MCF 10A (cell line): ENCODE measurements at regions of chr3 and their contacts with region 1.

Region 1: GRCh38 chr3:112676659-112677234 is 35.8 kb upstream of the CCDC80 start:
- DNase-seq: peak; percentile 97
- H3K4me3 Mint-ChIP-seq: peak overlapping the region; percentile 45
- H3K27ac Mint-ChIP-seq: peak overlapping the region; percentile 87
- H3K4me1 Mint-ChIP-seq: peaks cover 36% of the 10 kb centered on the region
- H3K27me3 Mint-ChIP-seq: no peaks in the 10 kb centered on the region
- CTCF ChIP-seq: no peak

Region 2: DNA sequence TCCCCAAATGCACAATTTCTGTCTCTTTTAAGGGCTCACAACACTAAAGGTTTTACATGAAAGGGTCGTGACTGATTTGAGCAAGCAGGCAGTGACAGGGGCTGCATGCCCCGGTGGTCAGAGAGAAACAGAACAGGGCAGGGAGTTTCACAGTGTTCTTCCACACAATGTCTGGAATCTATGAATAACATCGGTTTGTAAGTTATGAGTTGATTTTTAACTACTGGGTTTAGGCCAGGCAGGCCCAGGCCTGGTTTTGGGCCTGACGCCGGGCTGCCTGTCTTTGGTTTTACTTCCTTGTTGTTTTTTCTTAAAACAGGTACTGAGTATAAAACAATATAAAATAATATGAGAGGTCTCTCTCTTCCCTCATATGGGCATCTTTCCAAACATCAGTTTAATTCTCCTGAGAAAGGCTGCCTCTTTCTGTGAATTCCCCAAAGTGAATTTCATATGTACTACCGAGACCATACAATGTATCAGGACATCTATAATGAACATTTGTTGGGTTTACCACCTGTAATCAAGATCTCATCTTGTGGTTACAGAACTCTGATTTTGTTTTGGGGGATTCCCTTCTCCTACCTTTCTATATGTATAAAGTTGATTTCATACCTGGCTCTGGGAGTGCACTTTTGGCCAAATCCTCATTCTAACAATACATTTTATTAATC is 269.4 kb before region 1 on chr3:
- CTCF ChIA-PET with region 1: no interaction called
- POLR2A ChIA-PET with region 1: no interaction called
- intact Hi-C with region 1: no loop called
- DNase-seq: no peak
- H3K4me3 Mint-ChIP-seq: no peak overlapping the region
- H3K27ac Mint-ChIP-seq: no peak overlapping the region
- H3K4me1 Mint-ChIP-seq: no peaks in the 10 kb centered on the region
- H3K27me3 Mint-ChIP-seq: no peaks in the 10 kb centered on the region
- CTCF ChIP-seq: no peak

Region 3: DNA sequence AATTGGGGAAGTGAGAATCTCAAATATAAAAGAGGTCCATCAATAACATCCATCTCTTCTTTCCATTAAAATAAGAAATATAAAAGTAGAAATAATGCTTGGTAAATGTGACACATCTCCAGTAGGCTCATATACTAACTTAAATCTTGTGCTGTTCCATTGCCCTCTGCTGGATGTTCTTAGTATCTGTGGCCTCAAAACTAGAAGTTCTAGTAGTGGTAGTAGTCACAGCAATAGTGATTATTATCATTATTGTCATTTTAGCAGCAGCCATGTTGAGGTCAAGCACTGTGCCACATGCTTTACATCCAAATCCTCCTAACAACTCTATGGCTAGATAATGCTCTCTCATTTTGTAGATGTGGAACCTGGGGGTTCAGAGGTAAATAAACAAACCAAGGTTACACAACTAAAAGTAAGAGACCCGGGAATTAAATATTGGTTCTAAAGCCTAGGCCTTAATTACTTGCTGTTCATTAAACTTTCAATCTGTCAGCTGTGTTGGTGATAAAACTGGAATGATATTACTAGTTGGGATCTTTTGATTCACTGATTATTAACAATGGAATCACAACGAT is 157.2 kb before region 1 on chr3:
- CTCF ChIA-PET with region 1: no interaction called
- POLR2A ChIA-PET with region 1: no interaction called
- intact Hi-C with region 1: no loop called
- DNase-seq: peak; percentile 66
- H3K4me3 Mint-ChIP-seq: no peak overlapping the region
- H3K27ac Mint-ChIP-seq: no peak overlapping the region
- H3K4me1 Mint-ChIP-seq: no peaks in the 10 kb centered on the region
- H3K27me3 Mint-ChIP-seq: no peaks in the 10 kb centered on the region
- CTCF ChIP-seq: peak; percentile 69

Region 4: GRCh38 chr3:112653209-112653871 is 23.4 kb before region 1 on chr3:
- CTCF ChIA-PET with region 1: interaction called, 3 read pairs
- POLR2A ChIA-PET with region 1: interaction called, 12 read pairs
- intact Hi-C with region 1: no loop called
- DNase-seq: peak; percentile 67
- H3K4me3 Mint-ChIP-seq: peak overlapping the region; percentile 4
- H3K27ac Mint-ChIP-seq: peak overlapping the region; percentile 40
- H3K4me1 Mint-ChIP-seq: peaks cover 39% of the 10 kb centered on the region
- H3K27me3 Mint-ChIP-seq: no peaks in the 10 kb centered on the region
- CTCF ChIP-seq: no peak

Region 5: GRCh38 chr3:112948346-112948838 is 271.6 kb after region 1 on chr3:
- CTCF ChIA-PET with region 1: no interaction called
- POLR2A ChIA-PET with region 1: no interaction called
- intact Hi-C with region 1: no loop called
- DNase-seq: no peak
- H3K4me3 Mint-ChIP-seq: no peak overlapping the region
- H3K27ac Mint-ChIP-seq: no peak overlapping the region
- H3K4me1 Mint-ChIP-seq: no peaks in the 10 kb centered on the region
- H3K27me3 Mint-ChIP-seq: peaks cover 40% of the 10 kb centered on the region
- CTCF ChIP-seq: no peak

Region 6: GRCh38 chr3:113151461-113152031 is 474.8 kb after region 1 on chr3:
- CTCF ChIA-PET with region 1: no interaction called
- POLR2A ChIA-PET with region 1: no interaction called
- intact Hi-C with region 1: no loop called
- DNase-seq: no peak
- H3K4me3 Mint-ChIP-seq: no peak overlapping the region
- H3K27ac Mint-ChIP-seq: no peak overlapping the region
- H3K4me1 Mint-ChIP-seq: peaks cover 8% of the 10 kb centered on the region
- H3K27me3 Mint-ChIP-seq: no peaks in the 10 kb centered on the region
- CTCF ChIP-seq: no peak